ENCODE measurements at regions of chr6 and their contacts with region 1.

Region 1: DNA sequence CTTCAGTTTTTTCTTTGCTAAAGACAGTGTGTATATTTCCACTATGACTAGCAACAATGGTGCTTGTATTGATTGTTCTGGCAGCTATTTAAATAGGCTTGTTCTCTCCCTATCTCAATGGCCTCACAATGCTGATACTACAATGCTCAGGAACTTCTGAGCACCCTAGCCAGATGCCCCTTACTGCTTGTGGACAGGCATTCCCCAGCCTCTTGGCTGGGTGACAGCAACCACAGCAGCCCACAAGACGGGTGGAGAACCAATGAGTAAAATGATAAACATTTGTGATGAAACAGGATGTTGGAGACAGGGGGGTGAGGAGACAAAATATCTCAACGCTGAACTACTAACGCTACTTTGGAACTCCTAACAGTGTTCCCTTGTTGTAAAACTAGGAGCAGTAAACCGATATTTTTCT is 42.3 kb downstream of the HIVEP2 start:
- DNase-seq: peak; percentile 94
- H3K4me3 Mint-ChIP-seq: peak overlapping the region; percentile 41
- H3K27ac Mint-ChIP-seq: peak overlapping the region; percentile 91
- H3K4me1 Mint-ChIP-seq: peaks cover 33% of the 10 kb centered on the region
- H3K27me3 Mint-ChIP-seq: no peaks in the 10 kb centered on the region
- CTCF ChIP-seq: no peak

Region 2: GRCh38 chr6:142802124-142802523 is 100.5 kb before region 1 on chr6:
- CTCF ChIA-PET with region 1: no interaction called
- POLR2A ChIA-PET with region 1: no interaction called
- intact Hi-C with region 1: no loop called
- DNase-seq: peak; percentile 96
- H3K4me3 Mint-ChIP-seq: no peak overlapping the region
- H3K27ac Mint-ChIP-seq: peak overlapping the region; percentile 75
- H3K4me1 Mint-ChIP-seq: peaks cover 10% of the 10 kb centered on the region
- H3K27me3 Mint-ChIP-seq: no peaks in the 10 kb centered on the region
- CTCF ChIP-seq: no peak

Region 3: DNA sequence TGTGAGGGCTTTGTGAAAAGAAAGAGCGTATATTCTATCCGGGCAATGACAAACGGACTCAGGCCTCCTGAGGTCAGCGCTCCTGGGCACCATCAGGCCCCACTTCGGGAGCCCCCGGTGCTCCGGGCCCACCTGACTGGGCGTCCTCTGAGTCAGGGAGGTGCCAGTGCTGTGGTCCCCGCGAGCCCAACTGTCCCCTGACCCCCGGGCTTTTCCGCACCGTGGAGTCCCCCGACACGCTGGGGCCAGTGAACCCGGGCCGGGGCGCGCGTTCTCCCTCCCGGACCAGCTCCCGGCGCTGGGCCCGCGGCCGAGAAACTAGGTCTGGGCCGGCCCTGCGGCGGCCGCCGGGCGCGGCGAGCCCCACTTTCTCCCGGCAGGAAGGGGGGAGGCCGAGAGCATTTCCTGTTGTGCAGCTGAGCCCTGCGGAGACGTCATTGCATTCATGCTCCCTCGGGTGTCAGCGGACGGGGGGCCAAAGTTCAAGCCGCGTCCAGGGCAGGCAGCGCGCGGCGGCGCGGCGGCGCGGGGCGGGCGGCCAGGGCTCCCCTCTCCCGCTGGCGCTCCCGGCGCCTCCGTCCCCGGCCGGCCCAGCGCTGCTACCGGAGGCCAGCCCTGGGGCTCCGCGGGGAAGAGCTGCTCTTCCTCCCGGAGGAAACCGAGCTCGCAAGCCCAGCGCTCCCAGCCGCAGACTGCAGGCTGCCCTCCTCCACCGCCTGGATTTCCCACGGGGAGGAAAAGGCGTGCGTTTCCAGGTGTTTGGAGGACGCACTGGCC is 24.0 kb after region 1 on chr6:
- CTCF ChIA-PET with region 1: no interaction called
- POLR2A ChIA-PET with region 1: interaction called, 13 read pairs
- intact Hi-C with region 1: no loop called
- DNase-seq: peak; percentile 61
- H3K4me3 Mint-ChIP-seq: peak overlapping the region; percentile 84
- H3K27ac Mint-ChIP-seq: peak overlapping the region; percentile 92
- H3K4me1 Mint-ChIP-seq: peaks cover 44% of the 10 kb centered on the region
- H3K27me3 Mint-ChIP-seq: no peaks in the 10 kb centered on the region
- CTCF ChIP-seq: no peak

Region 4: GRCh38 chr6:143123081-143123480 is 220.4 kb after region 1 on chr6:
- CTCF ChIA-PET with region 1: no interaction called
- POLR2A ChIA-PET with region 1: no interaction called
- intact Hi-C with region 1: no loop called
- DNase-seq: no peak
- H3K4me3 Mint-ChIP-seq: no peak overlapping the region
- H3K27ac Mint-ChIP-seq: no peak overlapping the region
- H3K4me1 Mint-ChIP-seq: no peaks in the 10 kb centered on the region
- H3K27me3 Mint-ChIP-seq: no peaks in the 10 kb centered on the region
- CTCF ChIP-seq: no peak